Activated CD4-positive, alpha-beta T cell treated with anti-CD3 and anti-CD28 coated beads, Interleukin-2, amount 10 ng/mL, durations not matched to agents 7 days and 5 days (primary cell): ENCODE measurements at regions of chr2 and their contacts with region 1.

Region 1: GRCh38 chr2:237691908-237692600 is 64.7 kb downstream of the LRRFIP1 start:
- DNase-seq: peak; percentile 94
- H3K4me3 Mint-ChIP-seq: peak overlapping the region; percentile 94
- H3K27ac Mint-ChIP-seq: peak overlapping the region; percentile 95
- H3K4me1 Mint-ChIP-seq: peaks cover 66% of the 10 kb centered on the region
- H3K27me3 Mint-ChIP-seq: no peaks in the 10 kb centered on the region

Region 2: DNA sequence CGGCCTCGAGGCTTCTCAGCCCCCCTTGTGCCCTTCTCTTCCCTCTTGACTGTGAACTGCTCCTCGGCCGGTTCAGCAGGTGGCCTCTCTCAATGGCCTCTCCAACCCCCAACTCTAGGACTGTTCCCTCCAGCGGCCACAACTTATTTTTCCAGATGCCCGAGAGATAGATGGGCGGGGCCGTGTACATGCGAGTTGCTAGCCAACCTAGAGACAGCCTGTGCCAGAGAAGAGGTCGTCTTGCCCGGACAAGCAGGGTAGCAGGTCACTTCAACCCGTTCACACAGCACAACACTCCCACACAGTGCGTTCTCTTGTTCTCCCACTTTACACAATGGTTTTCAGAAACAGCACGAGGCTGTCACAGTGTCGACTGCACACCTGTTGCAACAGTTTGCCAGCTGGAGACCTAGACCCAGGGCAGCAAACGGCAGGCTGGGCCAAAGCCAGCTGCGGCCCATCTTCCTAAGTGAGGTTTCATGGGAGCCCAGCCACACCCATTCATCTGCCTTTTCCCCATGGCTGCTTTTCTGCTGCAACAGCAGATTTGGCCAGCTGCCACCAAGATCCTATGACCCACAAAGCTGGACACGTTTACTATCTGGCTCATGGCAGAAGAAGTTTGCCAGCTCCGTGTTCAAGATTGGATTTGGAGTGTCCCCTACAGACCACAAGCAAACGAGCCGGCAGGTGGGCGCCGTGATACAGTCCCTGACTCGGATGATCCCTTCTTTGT is 133.0 kb before region 1 on chr2:
- CTCF ChIA-PET with region 1: no interaction called
- POLR2A ChIA-PET with region 1: no interaction called
- DNase-seq: no peak
- H3K4me3 Mint-ChIP-seq: no peak overlapping the region
- H3K27ac Mint-ChIP-seq: no peak overlapping the region
- H3K4me1 Mint-ChIP-seq: peaks cover 13% of the 10 kb centered on the region
- H3K27me3 Mint-ChIP-seq: peaks cover 2% of the 10 kb centered on the region

Region 3: DNA sequence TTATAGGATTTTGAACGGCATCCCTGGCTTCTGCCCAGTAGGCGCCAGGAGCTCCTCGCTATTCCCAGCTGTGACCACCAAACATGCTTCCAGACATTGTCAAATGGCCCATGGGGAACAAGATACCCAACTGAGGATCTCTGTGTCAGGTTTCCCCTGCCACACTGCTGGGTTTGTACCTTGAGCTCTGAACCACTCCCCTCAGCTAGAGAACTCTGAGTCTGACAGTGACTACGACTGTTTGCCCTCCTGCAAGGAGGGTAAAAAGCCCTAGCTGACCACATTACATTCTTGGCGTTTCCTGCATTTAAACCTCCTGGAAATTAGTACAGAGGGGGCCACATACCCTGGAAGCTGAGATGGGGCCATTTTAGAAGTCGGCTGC is 52.2 kb before region 1 on chr2:
- CTCF ChIA-PET with region 1: no interaction called
- POLR2A ChIA-PET with region 1: no interaction called
- DNase-seq: no peak
- H3K4me3 Mint-ChIP-seq: no peak overlapping the region
- H3K27ac Mint-ChIP-seq: no peak overlapping the region
- H3K4me1 Mint-ChIP-seq: peaks cover 7% of the 10 kb centered on the region
- H3K27me3 Mint-ChIP-seq: peaks cover 4% of the 10 kb centered on the region

Region 4: GRCh38 chr2:237708065-237708398 is 16.0 kb after region 1 on chr2:
- CTCF ChIA-PET with region 1: interaction called, 22 read pairs
- POLR2A ChIA-PET with region 1: no interaction called
- DNase-seq: no peak
- H3K4me3 Mint-ChIP-seq: no peak overlapping the region
- H3K27ac Mint-ChIP-seq: no peak overlapping the region
- H3K4me1 Mint-ChIP-seq: peaks cover 59% of the 10 kb centered on the region
- H3K27me3 Mint-ChIP-seq: no peaks in the 10 kb centered on the region

Region 5: GRCh38 chr2:237744613-237745249 is 52.7 kb after region 1 on chr2:
- CTCF ChIA-PET with region 1: interaction called, 15 read pairs
- POLR2A ChIA-PET with region 1: no interaction called
- DNase-seq: peak; percentile 74
- H3K4me3 Mint-ChIP-seq: no peak overlapping the region
- H3K27ac Mint-ChIP-seq: peak overlapping the region; percentile 68
- H3K4me1 Mint-ChIP-seq: peaks cover 21% of the 10 kb centered on the region
- H3K27me3 Mint-ChIP-seq: no peaks in the 10 kb centered on the region

Region 6: GRCh38 chr2:237806334-237806733 is 114.3 kb after region 1 on chr2:
- CTCF ChIA-PET with region 1: no interaction called
- POLR2A ChIA-PET with region 1: no interaction called
- DNase-seq: no peak
- H3K4me3 Mint-ChIP-seq: no peak overlapping the region
- H3K27ac Mint-ChIP-seq: no peak overlapping the region
- H3K4me1 Mint-ChIP-seq: no peaks in the 10 kb centered on the region
- H3K27me3 Mint-ChIP-seq: peaks cover 10% of the 10 kb centered on the region